ENCODE measurements at regions of chr5 and their contacts with region 1.

Region 1: GRCh38 chr5:73454351-73455036 is 5.9 kb upstream of the FOXD1 start:
- DNase-seq: no peak
- H3K4me3 ChIP-seq: no peak overlapping the region
- H3K27ac ChIP-seq: no peak overlapping the region
- H3K4me1 ChIP-seq: no peaks in the 10 kb centered on the region
- H3K27me3 ChIP-seq: peaks cover 31% of the 10 kb centered on the region
- CTCF ChIP-seq: peak in 3 of 4 experiments; percentile 29 to 57 (median 35)
- POLR2A ChIP-seq: no peak

Region 2: DNA sequence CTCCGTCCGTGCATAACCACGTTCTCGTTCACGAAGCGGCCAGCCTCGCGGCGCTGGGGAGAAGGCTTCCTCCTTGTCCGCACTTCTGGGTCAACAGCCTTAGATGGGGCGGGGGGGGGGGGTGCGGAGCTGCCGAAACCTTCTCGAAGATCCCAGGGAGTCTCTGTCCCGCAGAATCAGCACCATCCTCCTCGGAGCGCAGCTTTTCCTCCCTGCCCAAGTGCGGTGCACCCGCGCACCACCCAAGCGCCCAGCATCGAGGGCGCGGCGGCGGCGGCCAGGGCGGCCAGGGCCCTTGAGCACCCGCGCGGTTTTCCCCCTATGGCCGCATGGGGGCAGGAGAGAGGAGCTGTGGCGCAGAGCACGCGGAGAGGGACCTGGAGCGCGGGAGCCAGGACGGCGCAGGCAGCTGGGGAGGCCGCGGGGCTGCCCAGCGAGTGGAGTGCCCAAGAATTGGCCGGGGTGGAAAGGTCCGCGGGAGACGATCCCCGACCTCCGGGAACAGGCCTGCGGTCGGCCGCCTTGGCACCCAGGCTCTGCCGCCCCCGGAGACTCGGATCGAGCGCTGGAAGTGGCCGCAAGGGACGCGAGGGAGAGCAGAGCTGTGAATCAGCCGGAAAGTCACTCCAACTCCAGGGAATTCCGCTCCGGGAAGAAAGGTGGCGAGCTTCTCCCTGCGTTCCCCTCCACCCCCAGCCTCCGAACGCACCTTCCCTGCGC is 238.4 kb before region 1 on chr5:
- intact Hi-C with region 1: loop called (anchors 5 kb)
- DNase-seq: peak; percentile 61
- H3K4me3 ChIP-seq: peak overlapping the region; percentile 14 to 28
- H3K27ac ChIP-seq: no peak overlapping the region
- H3K4me1 ChIP-seq: no peaks in the 10 kb centered on the region
- H3K27me3 ChIP-seq: peaks cover 27% of the 10 kb centered on the region
- CTCF ChIP-seq: peak; percentile 73 to 88 (median 82)
- POLR2A ChIP-seq: no peak

Region 3: GRCh38 chr5:73722231-73722630 is 267.7 kb after region 1 on chr5:
- intact Hi-C with region 1: no loop called
- DNase-seq: no peak
- H3K4me3 ChIP-seq: no peak overlapping the region
- H3K27ac ChIP-seq: no peak overlapping the region
- H3K4me1 ChIP-seq: no peaks in the 10 kb centered on the region
- H3K27me3 ChIP-seq: no peaks in the 10 kb centered on the region
- CTCF ChIP-seq: no peak
- POLR2A ChIP-seq: no peak

Measured in prostate gland (tissue), 2 donors.